ENCODE measurements at regions of chr18 and their contacts with region 1.

Region 1: GRCh38 chr18:54197747-54198411 is 26.6 kb downstream of the MBD2 start:
- DNase-seq: no peak
- CTCF ChIP-seq: no peak

Region 2: DNA sequence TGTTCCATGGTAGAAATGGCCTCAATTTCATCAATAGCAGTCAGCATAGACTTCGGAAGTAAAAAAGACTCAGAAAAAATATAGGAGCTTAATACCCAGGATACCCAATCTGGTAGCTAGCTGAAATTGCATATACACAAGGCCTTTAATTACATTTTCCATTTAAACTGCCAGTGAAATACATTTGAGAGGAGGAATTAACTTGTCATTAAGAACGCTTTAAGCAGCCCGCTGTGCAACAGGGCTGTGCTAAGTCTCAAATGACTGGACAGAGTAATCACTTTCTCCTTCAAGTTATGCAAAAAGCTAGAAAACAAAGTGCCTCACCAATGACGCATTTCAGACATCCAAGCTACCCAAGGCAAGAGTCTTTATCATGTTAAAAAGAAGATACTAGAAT is 532.2 kb before region 1 on chr18:
- CTCF ChIA-PET with region 1: no interaction called
- POLR2A ChIA-PET with region 1: no interaction called
- DNase-seq: no peak
- CTCF ChIP-seq: no peak

Region 3: GRCh38 chr18:54209471-54210180 is 11.7 kb after region 1 on chr18:
- CTCF ChIA-PET with region 1: interaction called, 12 read pairs
- POLR2A ChIA-PET with region 1: interaction called, 5 read pairs
- DNase-seq: peak; percentile 37
- CTCF ChIP-seq: no peak

Measured in GM10248 (cell line).